OCI-LY7 (cell line): ENCODE measurements at regions of chr4 and their contacts with region 1.

Region 1: DNA sequence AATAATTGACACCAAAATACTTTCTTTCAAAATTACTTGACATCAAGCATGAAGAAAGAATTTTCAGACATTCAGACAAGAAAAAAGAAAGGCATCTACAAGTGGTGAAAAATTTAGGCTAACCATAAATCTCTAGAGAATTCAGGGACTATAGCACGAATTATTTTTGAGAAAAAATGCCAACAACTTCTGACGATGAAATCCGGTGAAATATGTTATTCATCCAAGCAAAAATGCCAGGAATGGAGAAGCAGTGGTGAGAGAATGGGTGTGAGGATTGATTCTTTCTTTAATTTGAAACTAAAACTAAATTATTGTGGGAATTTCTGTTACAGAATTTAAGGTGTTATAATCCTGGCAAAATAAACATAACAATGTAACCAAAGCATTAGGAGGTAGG is 69.4 kb upstream of the SORBS2 start:
- DNase-seq: no peak
- H3K4me3 ChIP-seq: no peak overlapping the region
- H3K27ac ChIP-seq: no peak overlapping the region
- H3K4me1 ChIP-seq: peaks cover 16% of the 10 kb centered on the region
- CTCF ChIP-seq: no peak

Region 2: DNA sequence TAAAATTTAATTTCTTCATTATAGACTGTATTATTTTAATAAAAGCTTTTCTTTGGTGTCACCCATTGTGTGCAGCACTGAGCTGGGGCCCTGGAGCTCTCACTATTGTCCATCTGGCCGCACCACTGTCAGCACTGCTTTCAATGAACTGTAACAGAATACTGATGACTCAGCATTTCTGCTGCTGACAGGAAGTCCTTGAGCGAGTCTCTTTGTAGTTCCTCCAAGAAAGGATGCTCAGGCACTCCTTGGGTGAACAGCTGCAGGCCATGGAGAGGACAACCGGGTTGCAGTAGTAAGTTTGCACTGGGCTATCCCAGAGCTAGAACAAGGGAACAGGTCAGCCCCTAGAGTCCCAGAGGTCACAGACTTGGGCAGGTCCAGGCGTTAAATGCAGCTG is 151.0 kb before region 1 on chr4:
- CTCF ChIA-PET with region 1: no interaction called
- POLR2A ChIA-PET with region 1: interaction called, 3 read pairs
- intact Hi-C with region 1: loop called (anchors 5 kb)
- DNase-seq: peak; percentile 78
- H3K4me3 ChIP-seq: peak overlapping the region; percentile 46
- H3K27ac ChIP-seq: peak overlapping the region; percentile 47
- H3K4me1 ChIP-seq: peaks cover 51% of the 10 kb centered on the region
- CTCF ChIP-seq: no peak